ENCODE measurements at regions of chr11 and their contacts with region 1.

Region 1: DNA sequence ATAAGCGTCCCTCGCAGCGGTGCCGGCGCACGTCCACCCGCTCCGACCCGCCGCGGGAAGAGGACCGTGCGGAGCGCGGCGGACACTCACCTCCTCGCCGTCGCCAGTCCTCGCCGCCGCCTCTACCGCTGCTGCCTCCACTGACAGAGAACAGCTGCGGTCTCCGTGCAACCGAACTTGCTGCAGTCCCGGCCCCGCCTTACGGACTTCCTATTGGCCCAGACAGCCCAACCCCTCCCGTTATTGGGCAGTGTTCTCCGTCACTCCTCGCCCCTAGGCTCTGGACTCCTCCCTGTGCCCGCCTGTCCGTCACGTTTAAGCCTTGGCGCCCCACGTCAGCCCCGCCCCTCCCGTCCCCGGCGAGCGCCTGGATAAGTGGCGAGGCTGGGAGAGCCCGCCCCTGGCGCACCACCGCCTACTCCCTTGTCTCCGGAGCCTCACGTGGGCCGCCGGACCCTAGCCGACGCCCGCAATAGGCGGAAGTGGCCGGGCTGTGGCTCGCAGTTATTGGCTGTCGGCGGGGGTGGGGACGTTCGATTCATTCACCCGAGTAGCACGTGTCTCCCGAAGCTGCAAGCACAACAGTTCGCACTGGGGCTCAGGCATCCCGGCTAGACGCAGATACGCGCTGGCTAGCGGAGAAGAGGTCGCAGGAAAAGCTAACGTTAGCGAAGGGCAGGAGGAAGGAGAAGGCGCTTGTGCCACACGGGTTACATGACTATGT is at the start of gene PC:
- DNase-seq: peak; percentile 99 to 100 (median 99)
- ATAC-seq: peak; percentile 98 to 100 (median 100)
- H3K4me3 ChIP-seq: peak within 1 kb of the TSS; percentile 45 to 86 (median 72)
- H3K27ac ChIP-seq: peak within 1 kb of the TSS in 11 of 12 donors; percentile 57 to 92 (median 78)
- H3K4me1 ChIP-seq: peaks cover 0 to 18% (median 12%) of the 10 kb centered on the region in 12 donors
- H3K27me3 ChIP-seq: no peaks in the 10 kb centered on the region
- CTCF ChIP-seq: no peak
- POLR2A ChIP-seq: peak in 1 of 2 donors; percentile 88
- total RNA-seq, gene PC: 2.6 to 22.4 (median 13.1) TPM

Region 2: GRCh38 chr11:66855574-66856495 is 102.6 kb before region 1 on chr11:
- intact Hi-C with region 1: loop called in 2 of 10 experiments (anchors 5 kb)
- DNase-seq: peak; percentile 94 to 98 (median 97)
- ATAC-seq: peak; percentile 87 to 95 (median 93)
- H3K4me3 ChIP-seq: peak overlapping the region; percentile 44 to 98 (median 74)
- H3K27ac ChIP-seq: peak overlapping the region; percentile 74 to 97 (median 90)
- H3K4me1 ChIP-seq: peaks cover 0 to 13% (median 7%) of the 10 kb centered on the region in 12 donors
- H3K27me3 ChIP-seq: no peaks in the 10 kb centered on the region
- CTCF ChIP-seq: no peak
- POLR2A ChIP-seq: peak in 1 of 2 donors; percentile 83

Measured in heart left ventricle (tissue), 16 donors.